ENCODE measurements at regions of chr15 and their contacts with region 1.

Region 1: DNA sequence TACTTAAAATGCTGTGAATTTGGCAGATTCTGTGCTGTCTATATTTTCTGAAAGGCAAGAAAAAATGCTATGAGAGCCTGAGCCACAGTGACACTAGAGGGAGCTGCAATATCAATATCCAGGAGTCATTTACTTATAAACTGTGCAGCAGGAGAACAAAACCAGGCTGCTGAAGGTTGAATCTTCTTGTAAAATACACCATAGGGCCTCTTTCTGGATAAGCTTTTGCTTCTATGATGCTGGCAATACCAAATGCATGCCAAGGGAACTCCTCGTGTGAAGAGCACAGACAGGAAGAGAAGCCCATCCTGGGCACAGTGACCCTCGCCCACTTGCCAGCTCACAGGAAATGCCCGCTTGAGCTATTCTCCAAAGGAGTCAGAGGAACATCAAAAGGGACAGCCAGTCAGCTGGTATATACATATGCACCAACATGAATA is 48.0 kb upstream of the TSPAN3 start:
- DNase-seq: peak in 2 of 5 donors; percentile 37 to 38
- ATAC-seq: peak; percentile 72 to 79 (median 76)
- H3K4me3 ChIP-seq: no peak overlapping the region
- H3K27ac ChIP-seq: peak overlapping the region in 1 of 12 donors; percentile 4
- H3K4me1 ChIP-seq: peaks cover 0 to 34% (median 17%) of the 10 kb centered on the region in 12 donors
- H3K27me3 ChIP-seq: no peaks in the 10 kb centered on the region
- CTCF ChIP-seq: peak; percentile 49 to 88 (median 75)
- POLR2A ChIP-seq: no peak

Region 2: DNA sequence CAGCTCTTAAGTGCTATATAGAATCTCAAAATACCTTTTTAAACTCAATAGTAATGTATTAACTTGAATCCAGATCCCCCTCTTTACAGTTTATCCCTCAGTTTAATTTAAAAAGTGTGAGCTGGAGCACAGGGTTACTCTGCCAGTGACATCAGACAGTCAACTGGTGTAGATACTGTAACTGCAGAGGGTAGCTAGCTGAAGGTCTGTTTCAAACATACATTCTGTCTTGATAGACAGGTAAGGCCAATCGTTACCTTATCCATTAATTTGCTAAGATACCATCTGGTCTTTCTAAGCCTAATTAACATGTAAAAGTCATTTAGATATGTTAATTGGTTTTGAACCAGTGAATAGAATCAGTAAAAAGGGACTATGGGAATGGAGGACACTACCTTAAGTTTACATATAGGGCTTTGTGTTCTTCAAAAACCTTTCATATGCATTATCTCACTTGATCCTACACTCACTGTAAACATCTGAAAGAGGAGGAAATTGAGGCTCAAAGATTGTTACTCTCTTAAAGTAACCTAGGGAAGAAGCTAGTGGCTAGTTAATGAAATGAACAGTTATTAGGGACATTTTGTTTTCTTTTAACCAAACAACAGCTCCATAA is 11.5 kb after region 1 on chr15:
- intact Hi-C with region 1: no loop called
- DNase-seq: no peak
- ATAC-seq: no peak
- H3K4me3 ChIP-seq: no peak overlapping the region
- H3K27ac ChIP-seq: no peak overlapping the region
- H3K4me1 ChIP-seq: peaks cover 0 to 38% (median 12%) of the 10 kb centered on the region in 12 donors
- H3K27me3 ChIP-seq: no peaks in the 10 kb centered on the region
- CTCF ChIP-seq: no peak
- POLR2A ChIP-seq: no peak

Region 3: DNA sequence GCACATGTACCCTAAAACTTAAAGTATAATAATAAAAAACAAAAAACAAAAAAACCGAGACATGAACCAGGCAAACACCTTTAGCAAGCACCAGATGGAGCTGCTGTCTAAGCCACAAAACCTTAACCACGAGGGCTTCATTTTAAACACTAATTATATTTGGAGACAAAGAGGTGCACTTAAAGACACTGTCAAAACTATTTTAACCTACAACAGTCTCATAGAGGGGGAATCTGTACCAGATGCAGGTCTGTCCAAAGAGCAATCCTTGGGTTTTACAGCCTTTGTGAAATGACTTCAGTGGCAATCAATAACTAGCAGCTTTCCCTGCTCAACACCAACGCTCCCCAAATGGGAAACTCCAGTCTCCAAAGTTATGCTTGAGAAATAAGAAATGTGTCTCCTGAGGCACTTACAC is 67.7 kb after region 1 on chr15:
- intact Hi-C with region 1: loop called in 2 of 10 experiments (anchors 5 to 10 kb)
- DNase-seq: no peak
- ATAC-seq: peak in 3 of 4 donors; percentile 24 to 53 (median 33)
- H3K4me3 ChIP-seq: no peak overlapping the region
- H3K27ac ChIP-seq: peak overlapping the region; percentile 42 to 93 (median 86)
- H3K4me1 ChIP-seq: peaks cover 3 to 66% (median 49%) of the 10 kb centered on the region in 12 donors
- H3K27me3 ChIP-seq: no peaks in the 10 kb centered on the region
- CTCF ChIP-seq: peak; percentile 40 to 76 (median 64)
- POLR2A ChIP-seq: no peak

Region 4: DNA sequence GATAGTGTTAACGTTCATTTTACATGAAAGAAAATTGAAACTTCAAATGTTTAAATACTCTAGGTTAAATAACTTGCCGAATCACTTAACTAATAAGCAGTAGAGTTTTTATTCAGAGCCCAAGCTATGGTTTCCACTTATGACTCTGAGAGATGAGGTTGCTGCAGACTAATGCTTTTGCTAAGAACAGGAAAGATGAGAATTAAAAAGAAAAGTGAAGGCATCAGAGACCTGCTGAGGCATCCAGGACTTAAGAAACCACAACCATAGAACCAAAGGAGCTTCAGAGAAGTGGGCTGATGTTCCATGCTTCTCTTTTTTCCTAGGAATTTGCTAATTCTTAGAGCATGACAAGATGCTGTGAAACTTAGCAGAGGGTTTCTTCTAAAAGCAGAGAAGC is 311.3 kb after region 1 on chr15:
- intact Hi-C with region 1: loop called in 1 of 10 experiments (anchors 5 kb)
- DNase-seq: no peak
- ATAC-seq: no peak
- H3K4me3 ChIP-seq: no peak overlapping the region
- H3K27ac ChIP-seq: no peak overlapping the region
- H3K4me1 ChIP-seq: peaks cover 0 to 26% (median 7%) of the 10 kb centered on the region in 12 donors
- H3K27me3 ChIP-seq: no peaks in the 10 kb centered on the region
- CTCF ChIP-seq: no peak
- POLR2A ChIP-seq: no peak

Region 5: DNA sequence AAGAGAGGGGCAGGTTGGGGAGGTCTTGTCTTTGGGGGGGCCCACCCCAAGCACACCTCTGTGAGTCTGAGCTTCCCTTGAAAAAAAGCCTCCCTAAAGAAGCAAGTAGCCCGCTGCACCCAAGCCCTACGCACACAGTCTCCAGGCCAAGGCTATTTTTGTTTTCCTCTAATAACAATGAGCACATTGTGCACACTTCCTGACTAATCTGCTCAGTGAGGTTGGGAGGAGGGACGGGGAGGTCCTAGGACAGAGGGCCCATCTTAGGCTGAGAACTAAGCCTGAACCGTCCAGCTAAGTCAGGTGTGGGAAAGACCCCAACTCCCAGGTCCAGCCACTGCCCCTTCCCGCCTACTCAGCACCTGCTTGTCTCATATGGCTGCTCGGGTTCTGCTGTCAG is 389.0 kb after region 1 on chr15:
- intact Hi-C with region 1: loop called in 1 of 10 experiments (anchors 10 kb)
- DNase-seq: peak in 4 of 5 donors; percentile 81 to 86 (median 82)
- ATAC-seq: peak; percentile 90 to 93 (median 92)
- H3K4me3 ChIP-seq: peak overlapping the region in 3 of 12 donors; percentile 13 to 24 (median 21)
- H3K27ac ChIP-seq: peak overlapping the region; percentile 86 to 98 (median 94)
- H3K4me1 ChIP-seq: peaks cover 12 to 87% (median 63%) of the 10 kb centered on the region in 12 donors
- H3K27me3 ChIP-seq: no peaks in the 10 kb centered on the region
- CTCF ChIP-seq: no peak
- POLR2A ChIP-seq: peak; percentile 29 to 46

Region 6: DNA sequence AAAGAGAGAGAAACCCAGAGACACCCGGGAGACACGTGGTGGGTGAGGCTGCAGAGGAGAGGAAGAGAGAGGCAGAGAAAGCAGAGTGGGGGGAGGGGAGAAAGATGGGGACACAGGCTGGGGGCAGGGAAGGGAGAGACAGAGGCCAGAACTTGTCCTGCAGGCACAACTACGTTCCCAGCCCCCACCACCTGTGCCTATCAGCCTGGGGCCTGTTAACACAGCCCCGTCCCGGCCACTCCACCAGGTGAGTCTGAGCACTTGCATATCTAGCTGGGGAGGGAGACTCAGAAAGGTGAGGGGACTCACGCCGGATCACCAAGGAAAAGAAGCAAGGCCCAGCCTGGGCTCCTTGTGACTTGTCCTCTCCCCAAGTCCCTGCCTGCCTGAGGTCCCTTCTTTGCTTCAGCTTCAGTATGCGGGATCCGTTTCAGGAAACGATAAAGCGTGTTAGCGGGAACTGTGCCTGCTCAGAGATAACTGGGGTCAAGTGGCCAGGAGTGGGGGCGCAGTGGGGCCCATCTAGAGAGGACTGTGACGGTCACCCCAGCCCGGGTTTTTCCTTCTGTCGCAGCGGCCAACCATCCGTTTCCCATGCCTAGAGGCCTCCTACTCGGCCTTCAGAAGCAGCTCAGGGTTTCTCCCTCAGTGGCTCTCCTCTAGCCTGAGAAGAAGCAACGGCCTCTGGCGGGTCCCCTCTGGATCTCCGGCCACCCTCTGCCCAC is 503.5 kb after region 1 on chr15:
- intact Hi-C with region 1: loop called in 1 of 10 experiments (anchors 10 kb)
- DNase-seq: no peak
- ATAC-seq: peak in 1 of 4 donors; percentile 27
- H3K4me3 ChIP-seq: no peak overlapping the region
- H3K27ac ChIP-seq: no peak overlapping the region
- H3K4me1 ChIP-seq: peaks cover 0 to 12% (median 0%) of the 10 kb centered on the region in 12 donors
- H3K27me3 ChIP-seq: no peaks in the 10 kb centered on the region
- CTCF ChIP-seq: no peak
- POLR2A ChIP-seq: no peak

Measured in heart left ventricle (tissue), 16 donors.